Activated naive CD8-positive, alpha-beta T cell treated with anti-CD3 and anti-CD28 coated beads, Interleukin-2, amount 10 ng/mL, durations not matched to agents 7 days and 5 days (primary cell): ENCODE measurements at regions of chr6 and their contacts with region 1.

Region 1: DNA sequence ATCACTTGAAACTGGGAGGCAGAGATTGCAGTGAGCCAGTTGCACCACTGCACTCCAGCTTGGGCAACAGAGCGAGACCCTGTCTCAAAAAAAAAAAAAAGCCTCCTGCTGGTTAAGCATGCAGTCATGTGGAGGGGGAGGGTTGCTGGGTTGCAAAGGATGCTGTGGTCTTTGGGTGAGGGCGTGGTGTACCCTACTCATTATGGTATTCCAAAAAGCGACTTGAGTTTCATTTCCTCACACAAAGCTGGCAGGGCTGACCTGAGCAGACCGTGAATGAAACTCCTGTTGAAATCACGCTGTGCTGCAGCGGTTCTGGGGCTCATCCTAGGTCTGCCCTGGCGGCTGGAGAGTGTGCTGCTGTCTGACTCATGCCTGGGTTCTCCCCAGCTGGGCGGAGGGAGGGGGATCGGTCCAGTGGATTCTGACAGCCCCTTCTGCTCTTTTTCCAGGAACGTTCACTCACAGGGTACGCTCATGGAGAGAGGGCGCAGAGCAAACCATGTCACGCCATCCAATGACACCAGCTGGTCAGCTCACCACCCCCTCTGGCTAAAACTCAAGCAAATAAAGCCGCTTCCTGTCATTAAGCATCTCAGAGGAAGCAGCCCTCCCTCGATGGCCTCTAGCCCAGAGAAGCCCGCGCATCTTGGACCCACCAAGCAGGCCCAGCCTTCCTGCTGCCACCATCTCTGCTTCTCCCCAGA is 166.2 kb downstream of the SCML4 start:
- DNase-seq: peak; percentile 72
- ATAC-seq: peak; percentile 89
- H3K4me3 Mint-ChIP-seq: peak overlapping the region; percentile 87
- H3K27ac Mint-ChIP-seq: peak overlapping the region; percentile 96
- H3K4me1 Mint-ChIP-seq: peaks cover 52% of the 10 kb centered on the region
- H3K27me3 Mint-ChIP-seq: peaks cover 2% of the 10 kb centered on the region

Region 2: DNA sequence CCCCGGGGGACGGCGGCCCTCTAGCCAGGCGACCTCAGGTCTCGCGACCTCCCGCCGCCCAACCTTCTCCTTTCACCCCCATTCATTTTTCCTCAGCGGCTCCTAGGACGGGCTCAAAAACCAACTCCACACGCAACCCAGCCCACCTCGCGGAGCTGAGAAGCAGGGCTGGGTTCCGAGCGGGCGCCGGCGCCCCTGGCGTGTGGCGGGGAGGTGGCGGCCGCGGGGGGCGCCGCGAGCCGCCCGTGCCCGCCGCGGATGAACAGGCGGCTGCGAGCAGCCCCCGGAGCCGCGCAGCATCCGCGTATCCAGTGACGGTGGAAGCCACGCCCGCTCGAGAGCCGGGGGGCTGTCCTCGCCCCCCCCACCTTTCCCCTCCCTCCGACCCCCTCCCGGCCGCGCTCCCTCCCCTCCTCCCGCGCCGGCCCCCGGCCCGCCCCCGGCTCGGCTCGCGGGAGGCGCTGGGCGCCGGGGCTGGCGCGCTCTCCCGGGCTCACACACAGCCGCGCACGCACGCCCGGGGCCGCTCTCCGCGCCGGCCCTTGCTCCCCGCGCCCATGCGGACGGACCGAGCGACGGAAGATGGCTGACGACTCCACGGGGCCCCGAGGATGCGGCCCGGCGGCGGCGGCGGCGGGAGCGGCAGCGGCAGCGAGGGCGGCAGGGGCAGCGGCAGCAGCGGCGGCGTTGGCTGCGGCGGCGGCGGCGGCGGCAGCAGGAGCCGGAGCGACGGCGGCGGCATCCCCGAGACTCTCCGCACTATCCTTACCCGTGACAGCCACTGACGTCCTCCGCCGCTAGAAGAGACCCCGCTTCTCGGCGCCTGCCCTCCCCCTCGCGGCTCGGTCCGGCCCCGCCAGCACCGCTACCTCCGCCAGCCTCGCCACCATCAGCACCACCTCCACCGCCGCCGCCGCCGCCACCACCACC is 168.0 kb before region 1 on chr6 and contains the start of gene SOBP:
- POLR2A ChIA-PET with region 1: interaction called, 13 read pairs
- DNase-seq: peak; percentile 69
- ATAC-seq: peak; percentile 66
- H3K4me3 Mint-ChIP-seq: peak within 1 kb of the TSS; percentile 91
- H3K27ac Mint-ChIP-seq: peak within 1 kb of the TSS; percentile 74
- H3K4me1 Mint-ChIP-seq: peaks cover 15% of the 10 kb centered on the region
- H3K27me3 Mint-ChIP-seq: peaks cover 36% of the 10 kb centered on the region
- total RNA-seq, gene SOBP: 1.2 to 1.4 TPM

Region 3: DNA sequence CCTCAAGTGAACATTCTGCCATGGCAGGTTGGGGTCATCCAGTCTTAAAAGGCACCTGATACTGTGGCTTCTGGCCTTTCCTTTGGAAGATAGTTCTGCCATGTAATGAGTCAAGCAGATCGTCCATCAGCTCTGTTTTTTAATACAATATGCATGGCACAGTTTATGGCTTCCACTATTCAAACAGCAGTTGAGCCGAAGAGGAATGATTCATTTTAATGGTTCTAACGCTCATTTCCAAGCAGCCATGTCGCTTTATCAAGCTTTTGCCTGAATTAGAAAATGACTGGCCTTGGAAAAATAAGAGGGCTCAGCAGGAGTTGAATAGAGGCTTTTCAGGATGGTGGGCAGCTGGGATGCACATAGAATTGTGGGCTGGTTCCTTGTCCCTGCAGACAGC is 30.0 kb before region 1 on chr6:
- POLR2A ChIA-PET with region 1: interaction called, 10 read pairs
- DNase-seq: no peak
- ATAC-seq: no peak
- H3K4me3 Mint-ChIP-seq: no peak overlapping the region
- H3K27ac Mint-ChIP-seq: no peak overlapping the region
- H3K4me1 Mint-ChIP-seq: peaks cover 17% of the 10 kb centered on the region
- H3K27me3 Mint-ChIP-seq: peaks cover 29% of the 10 kb centered on the region

Region 4: GRCh38 chr6:107674995-107675738 is 17.3 kb after region 1 on chr6:
- POLR2A ChIA-PET with region 1: interaction called, 55 read pairs
- DNase-seq: peak; percentile 93
- ATAC-seq: peak; percentile 97
- H3K4me3 Mint-ChIP-seq: peak overlapping the region; percentile 79
- H3K27ac Mint-ChIP-seq: peak overlapping the region; percentile 95
- H3K4me1 Mint-ChIP-seq: peaks cover 20% of the 10 kb centered on the region
- H3K27me3 Mint-ChIP-seq: peaks cover 6% of the 10 kb centered on the region